ENCODE measurements at regions of chr7 and their contacts with region 1.

Region 1: GRCh38 chr7:80095545-80095944 is 39.1 kb upstream of the GNAI1 start:
- DNase-seq: peak; percentile 31 to 60 (median 56)
- H3K4me3 ChIP-seq: no peak overlapping the region
- H3K27ac ChIP-seq: no peak overlapping the region
- H3K4me1 ChIP-seq: peaks cover 0 to 4% (median 0%) of the 10 kb centered on the region in 4 experiments
- H3K27me3 ChIP-seq: no peaks in the 10 kb centered on the region

Region 2: GRCh38 chr7:80040752-80041151 is 54.8 kb before region 1 on chr7:
- CTCF ChIA-PET with region 1: no interaction called
- POLR2A ChIA-PET with region 1: no interaction called
- DNase-seq: no peak
- H3K4me3 ChIP-seq: no peak overlapping the region
- H3K27ac ChIP-seq: no peak overlapping the region
- H3K4me1 ChIP-seq: no peaks in the 10 kb centered on the region
- H3K27me3 ChIP-seq: no peaks in the 10 kb centered on the region

Region 3: GRCh38 chr7:80070391-80070790 is 25.2 kb before region 1 on chr7:
- CTCF ChIA-PET with region 1: no interaction called
- POLR2A ChIA-PET with region 1: no interaction called
- DNase-seq: no peak
- H3K4me3 ChIP-seq: no peak overlapping the region
- H3K27ac ChIP-seq: no peak overlapping the region
- H3K4me1 ChIP-seq: no peaks in the 10 kb centered on the region
- H3K27me3 ChIP-seq: no peaks in the 10 kb centered on the region

Region 4: GRCh38 chr7:80107278-80107677 is 11.7 kb after region 1 on chr7:
- CTCF ChIA-PET with region 1: interaction called, 26 read pairs
- POLR2A ChIA-PET with region 1: no interaction called
- DNase-seq: peak; percentile 81 to 97 (median 92)
- H3K4me3 ChIP-seq: peak overlapping the region in 1 of 7 experiments; percentile 28
- H3K27ac ChIP-seq: peak overlapping the region; percentile 35 to 74
- H3K4me1 ChIP-seq: peaks cover 26 to 56% (median 39%) of the 10 kb centered on the region in 4 experiments
- H3K27me3 ChIP-seq: no peaks in the 10 kb centered on the region

Region 5: DNA sequence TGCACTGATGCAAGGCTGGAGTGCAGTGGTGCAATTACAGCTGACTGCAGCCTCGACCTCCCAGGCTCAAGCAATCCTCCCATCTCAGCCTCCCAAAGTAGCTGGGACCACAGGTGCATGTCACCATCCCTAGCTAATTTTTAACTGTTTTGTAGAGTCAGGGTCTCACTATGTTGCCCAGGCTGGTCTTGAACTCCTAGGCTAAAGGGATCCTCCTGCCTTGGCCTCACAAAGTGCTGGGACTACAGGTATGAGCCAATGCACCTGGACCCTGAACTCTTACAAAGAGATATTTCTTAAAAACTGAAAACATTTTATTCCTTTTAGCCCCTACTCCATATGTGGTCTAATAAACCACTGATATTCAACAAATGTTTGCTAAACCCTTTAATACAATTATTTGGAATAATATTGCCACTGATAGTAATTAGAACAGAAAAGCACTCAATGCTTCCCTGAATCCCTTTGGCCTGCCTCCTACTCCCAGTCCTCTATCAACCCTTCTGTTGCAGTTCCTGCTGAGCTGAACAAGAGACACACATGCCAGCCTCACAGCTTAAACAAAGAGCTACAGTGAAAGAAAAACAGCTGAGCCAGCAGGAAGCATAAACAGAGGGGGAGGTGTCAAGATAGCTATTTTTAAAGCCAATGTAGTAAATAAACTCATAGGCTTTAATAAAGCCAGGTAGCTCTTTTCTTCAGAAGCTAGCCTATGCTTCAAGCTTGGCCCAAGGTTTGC is 32.0 kb after region 1 on chr7:
- CTCF ChIA-PET with region 1: interaction called, 14 read pairs
- POLR2A ChIA-PET with region 1: interaction called, 3 read pairs
- DNase-seq: no peak
- H3K4me3 ChIP-seq: peak overlapping the region in 1 of 7 experiments; percentile 23
- H3K27ac ChIP-seq: no peak overlapping the region
- H3K4me1 ChIP-seq: peaks cover 29 to 59% (median 35%) of the 10 kb centered on the region in 4 experiments
- H3K27me3 ChIP-seq: no peaks in the 10 kb centered on the region

Region 6: GRCh38 chr7:80134536-80135320 is 39.2 kb after region 1 on chr7 and contains the start of gene GNAI1:
- CTCF ChIA-PET with region 1: interaction called, 17 read pairs
- POLR2A ChIA-PET with region 1: interaction called, 5 read pairs
- DNase-seq: peak; percentile 85 to 91 (median 91)
- H3K4me3 ChIP-seq: peak within 1 kb of the TSS; percentile 78 to 98 (median 97)
- H3K27ac ChIP-seq: peak within 1 kb of the TSS; percentile 59 to 76
- H3K4me1 ChIP-seq: peaks cover 21 to 61% (median 46%) of the 10 kb centered on the region in 4 experiments
- H3K27me3 ChIP-seq: no peaks in the 10 kb centered on the region

Region 7: GRCh38 chr7:80392229-80393169 is 297.0 kb after region 1 on chr7:
- CTCF ChIA-PET with region 1: interaction called, 31 read pairs
- POLR2A ChIA-PET with region 1: no interaction called
- DNase-seq: peak; percentile 45 to 68 (median 64)
- H3K4me3 ChIP-seq: no peak overlapping the region
- H3K27ac ChIP-seq: no peak overlapping the region
- H3K4me1 ChIP-seq: no peaks in the 10 kb centered on the region
- H3K27me3 ChIP-seq: no peaks in the 10 kb centered on the region

Measured in common myeloid progenitor, CD34-positive (primary cell).